MCF 10A (cell line): ENCODE measurements at regions of chr16 and their contacts with region 1.

Region 1: GRCh38 chr16:87278191-87279095 is 38.7 kb downstream of the C16orf95 start:
- DNase-seq: peak; percentile 77
- H3K4me3 Mint-ChIP-seq: no peak overlapping the region
- H3K27ac Mint-ChIP-seq: no peak overlapping the region
- H3K4me1 Mint-ChIP-seq: peaks cover 13% of the 10 kb centered on the region
- H3K27me3 Mint-ChIP-seq: peaks cover 40% of the 10 kb centered on the region
- CTCF ChIP-seq: peak; percentile 86

Region 2: DNA sequence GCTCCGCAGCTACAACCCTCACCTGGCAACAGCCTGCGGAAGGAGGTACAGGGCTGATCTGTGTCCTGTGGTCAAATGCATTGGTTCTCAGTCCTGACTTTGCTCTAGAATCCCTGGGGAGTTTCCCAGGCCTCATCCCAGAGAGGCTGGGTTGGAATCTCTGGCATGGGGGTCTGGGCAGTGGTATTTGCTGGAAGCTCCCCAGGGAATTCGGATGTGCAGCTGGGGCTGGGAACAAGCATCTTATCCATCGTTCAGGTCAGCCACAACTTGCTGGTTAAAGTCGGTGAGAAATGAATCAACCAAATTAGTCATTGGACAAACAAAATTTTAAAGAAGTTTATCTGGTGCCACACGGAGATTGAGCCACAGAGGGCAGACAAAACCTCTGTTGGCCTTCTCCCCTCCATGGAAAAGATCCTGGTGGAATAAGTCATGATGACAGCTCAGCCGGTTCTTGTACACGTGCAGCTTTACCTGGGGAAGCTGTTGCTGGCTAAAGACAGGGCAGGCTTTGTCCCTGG is 468.9 kb before region 1 on chr16:
- CTCF ChIA-PET with region 1: no interaction called
- POLR2A ChIA-PET with region 1: no interaction called
- intact Hi-C with region 1: loop called (anchors 2 kb)
- DNase-seq: peak; percentile 75
- H3K4me3 Mint-ChIP-seq: no peak overlapping the region
- H3K27ac Mint-ChIP-seq: no peak overlapping the region
- H3K4me1 Mint-ChIP-seq: peaks cover 9% of the 10 kb centered on the region
- H3K27me3 Mint-ChIP-seq: no peaks in the 10 kb centered on the region
- CTCF ChIP-seq: peak; percentile 27

Region 3: GRCh38 chr16:87017365-87018012 is 261.0 kb before region 1 on chr16:
- CTCF ChIA-PET with region 1: no interaction called
- POLR2A ChIA-PET with region 1: no interaction called
- intact Hi-C with region 1: loop called (anchors 1 kb)
- DNase-seq: peak; percentile 93
- H3K4me3 Mint-ChIP-seq: no peak overlapping the region
- H3K27ac Mint-ChIP-seq: no peak overlapping the region
- H3K4me1 Mint-ChIP-seq: peaks cover 7% of the 10 kb centered on the region
- H3K27me3 Mint-ChIP-seq: peaks cover 18% of the 10 kb centered on the region
- CTCF ChIP-seq: peak; percentile 41

Region 4: GRCh38 chr16:87203060-87203656 is 75.3 kb before region 1 on chr16:
- CTCF ChIA-PET with region 1: interaction called, 9 read pairs
- POLR2A ChIA-PET with region 1: interaction called, 3 read pairs
- intact Hi-C with region 1: loop called (anchors 1 kb)
- DNase-seq: peak; percentile 79
- H3K4me3 Mint-ChIP-seq: no peak overlapping the region
- H3K27ac Mint-ChIP-seq: no peak overlapping the region
- H3K4me1 Mint-ChIP-seq: peaks cover 39% of the 10 kb centered on the region
- H3K27me3 Mint-ChIP-seq: no peaks in the 10 kb centered on the region
- CTCF ChIP-seq: peak; percentile 82

Region 5: DNA sequence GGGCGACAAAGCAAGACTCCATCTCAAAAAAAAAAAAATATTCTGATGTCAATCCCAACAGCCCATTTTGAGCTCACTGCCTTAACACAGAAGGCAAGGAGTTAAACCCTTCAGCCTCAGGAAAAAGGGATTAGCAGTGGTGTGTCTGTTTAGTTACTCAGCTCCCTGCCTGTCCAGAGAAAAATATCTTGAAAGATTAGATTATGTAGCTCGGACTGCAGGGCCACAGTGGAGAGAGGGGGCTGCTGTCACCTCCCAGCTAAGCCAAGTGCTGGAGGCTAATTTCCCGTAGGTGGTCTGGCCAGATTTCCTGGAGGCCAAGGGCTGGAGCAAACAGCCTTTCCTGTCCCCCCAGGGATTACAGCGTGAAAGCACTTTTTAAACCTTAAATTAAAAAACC is 11.6 kb before region 1 on chr16:
- CTCF ChIA-PET with region 1: interaction called, 10 read pairs
- POLR2A ChIA-PET with region 1: interaction called, 3 read pairs
- intact Hi-C with region 1: no loop called
- DNase-seq: no peak
- H3K4me3 Mint-ChIP-seq: no peak overlapping the region
- H3K27ac Mint-ChIP-seq: no peak overlapping the region
- H3K4me1 Mint-ChIP-seq: peaks cover 11% of the 10 kb centered on the region
- H3K27me3 Mint-ChIP-seq: no peaks in the 10 kb centered on the region
- CTCF ChIP-seq: no peak